Activated naive CD8-positive, alpha-beta T cell treated with anti-CD3 and anti-CD28 coated beads, Interleukin-2, amount 10 ng/mL, durations not matched to agents 7 days and 5 days (primary cell): ENCODE measurements at regions of chr20 and their contacts with region 1.

Region 1: GRCh38 chr20:38926142-38926933 is at the start of gene FAM83D:
- DNase-seq: peak; percentile 94
- ATAC-seq: peak; percentile 95
- H3K4me3 Mint-ChIP-seq: peak within 1 kb of the TSS; percentile 89
- H3K27ac Mint-ChIP-seq: peak within 1 kb of the TSS; percentile 77
- H3K4me1 Mint-ChIP-seq: peaks cover 31% of the 10 kb centered on the region
- H3K27me3 Mint-ChIP-seq: no peaks in the 10 kb centered on the region
- total RNA-seq, gene FAM83D: 14.4 to 15.4 TPM

Region 2: DNA sequence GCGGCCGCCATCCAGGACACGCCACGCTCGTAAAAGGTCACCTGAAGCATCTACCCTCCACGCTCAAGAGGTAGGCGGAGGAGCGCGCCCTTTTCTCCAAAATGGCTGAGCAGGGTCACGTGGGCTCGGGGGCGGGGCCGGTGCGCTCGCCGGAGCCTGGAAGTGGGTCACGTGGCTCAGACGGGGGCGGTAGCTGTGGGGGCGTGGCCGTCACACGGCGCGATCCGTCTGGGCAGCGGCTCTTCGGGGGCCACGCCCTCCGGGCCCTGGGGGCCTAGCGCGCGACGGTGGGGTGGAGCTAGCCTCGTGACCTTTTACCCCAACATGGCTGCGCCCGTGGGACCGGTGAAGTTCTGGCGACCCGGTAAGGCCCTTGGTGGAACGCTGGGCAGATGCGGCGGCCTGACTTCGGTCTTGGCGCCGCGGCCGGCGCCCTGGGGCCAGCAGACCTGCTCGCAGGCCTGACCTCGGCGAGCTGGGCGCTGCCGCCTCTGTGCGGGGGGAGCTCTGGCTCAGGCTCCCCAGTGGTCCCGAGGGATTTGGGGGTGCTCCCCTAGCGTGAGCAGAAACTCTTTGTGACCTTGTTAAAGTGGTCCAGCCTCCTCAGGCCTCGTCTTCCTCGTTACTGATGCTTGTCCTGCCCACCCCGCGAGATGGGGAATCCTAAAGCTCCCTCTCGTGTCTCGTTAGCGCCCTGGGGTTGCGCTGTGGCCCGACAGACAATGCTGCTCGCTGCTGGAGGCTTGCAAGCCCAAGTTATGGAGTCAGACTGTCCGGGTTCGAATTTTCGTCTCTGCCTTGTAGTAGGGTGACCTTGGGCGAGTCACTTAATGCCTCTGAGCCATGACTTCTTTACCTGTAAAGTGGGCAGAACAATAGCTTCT is 35.9 kb after region 1 on chr20 and contains the start of gene DHX35:
- POLR2A ChIA-PET with region 1: interaction called, 14 read pairs
- DNase-seq: peak; percentile 99
- ATAC-seq: peak; percentile 98
- H3K4me3 Mint-ChIP-seq: peak within 1 kb of the TSS; percentile 95
- H3K27ac Mint-ChIP-seq: peak within 1 kb of the TSS; percentile 95
- H3K4me1 Mint-ChIP-seq: peaks cover 32% of the 10 kb centered on the region
- H3K27me3 Mint-ChIP-seq: no peaks in the 10 kb centered on the region
- total RNA-seq, gene DHX35: 10.3 to 10.7 TPM

Region 3: GRCh38 chr20:38973645-38974044 is 47.3 kb after region 1 on chr20:
- POLR2A ChIA-PET with region 1: no interaction called
- DNase-seq: no peak
- ATAC-seq: no peak
- H3K4me3 Mint-ChIP-seq: no peak overlapping the region
- H3K27ac Mint-ChIP-seq: no peak overlapping the region
- H3K4me1 Mint-ChIP-seq: peaks cover 9% of the 10 kb centered on the region
- H3K27me3 Mint-ChIP-seq: no peaks in the 10 kb centered on the region